A549 (cell line): ENCODE measurements at regions of chr3 and their contacts with region 1.

Region 1: GRCh38 chr3:102229062-102229655 is 205.7 kb upstream of the ZPLD1 start:
- DNase-seq: peak; percentile 19 to 75
- ATAC-seq: peak; percentile 78 to 88
- H3K4me3 ChIP-seq: no peak overlapping the region
- H3K27ac ChIP-seq: no peak overlapping the region
- H3K4me1 ChIP-seq: peaks cover 8% of the 10 kb centered on the region
- CTCF ChIP-seq: peak; percentile 92
- EP300 ChIP-seq: no peak
- POLR2A ChIP-seq: no peak
- RAD21 ChIP-seq: peak; percentile 94 to 95

Region 2: DNA sequence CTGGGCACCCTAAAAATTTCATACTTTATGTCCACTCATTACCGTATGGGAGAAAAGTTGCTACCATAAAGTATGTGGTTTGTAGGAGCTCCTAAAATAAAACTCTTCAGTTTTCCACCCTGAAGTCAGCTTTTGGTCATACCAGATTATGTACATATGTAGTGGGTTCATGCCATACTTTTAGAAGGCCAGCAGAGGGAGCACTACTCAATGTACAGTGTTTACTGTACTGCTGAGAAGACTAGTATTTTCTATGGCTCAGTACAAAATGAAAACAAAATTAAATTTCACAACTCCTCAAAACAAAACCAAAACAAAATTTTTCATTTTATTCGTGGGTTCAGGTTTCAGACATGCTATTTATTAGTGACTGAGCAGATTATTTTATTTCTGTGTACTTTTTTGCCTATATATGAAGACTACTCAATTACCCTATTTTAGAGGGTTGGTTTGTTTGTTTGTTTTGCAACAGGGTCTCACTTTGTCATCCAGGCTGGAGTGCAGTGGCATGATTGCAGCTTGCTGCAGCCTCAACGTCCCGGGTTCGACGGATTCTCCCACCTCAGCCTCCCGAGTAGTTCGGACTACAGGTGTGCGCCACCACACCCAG is 425.9 kb before region 1 on chr3:
- CTCF ChIA-PET with region 1: interaction called, 186 read pairs
- POLR2A ChIA-PET with region 1: no interaction called
- DNase-seq: peak; percentile 54 to 76
- ATAC-seq: peak; percentile 99
- H3K4me3 ChIP-seq: no peak overlapping the region
- H3K27ac ChIP-seq: no peak overlapping the region
- H3K4me1 ChIP-seq: no peaks in the 10 kb centered on the region
- CTCF ChIP-seq: peak; percentile 87
- EP300 ChIP-seq: no peak
- POLR2A ChIP-seq: no peak
- RAD21 ChIP-seq: peak; percentile 44 to 51; a peak in 4 of 5 replicates

Region 3: GRCh38 chr3:101827211-101828174 is 401.7 kb before region 1 on chr3:
- CTCF ChIA-PET with region 1: interaction called, 22 read pairs
- POLR2A ChIA-PET with region 1: interaction called, 7 read pairs
- DNase-seq: peak in 1 of 2 experiments; percentile 67
- ATAC-seq: peak; percentile 89 to 92
- H3K4me3 ChIP-seq: peak overlapping the region; percentile 61
- H3K27ac ChIP-seq: peak overlapping the region; percentile 88 to 94
- H3K4me1 ChIP-seq: peaks cover 40% of the 10 kb centered on the region
- CTCF ChIP-seq: no peak
- EP300 ChIP-seq: no peak
- POLR2A ChIP-seq: no peak
- RAD21 ChIP-seq: peak in 1 of 2 experiments; percentile 17; a peak in 2 of 5 replicates

Region 4: GRCh38 chr3:101868534-101869464 is 360.4 kb before region 1 on chr3:
- CTCF ChIA-PET with region 1: interaction called, 10 read pairs
- POLR2A ChIA-PET with region 1: interaction called, 4 read pairs
- DNase-seq: peak in 1 of 2 experiments; percentile 83
- ATAC-seq: peak; percentile 66 to 71
- H3K4me3 ChIP-seq: no peak overlapping the region
- H3K27ac ChIP-seq: peak overlapping the region; percentile 71 to 81
- H3K4me1 ChIP-seq: peaks cover 52% of the 10 kb centered on the region
- CTCF ChIP-seq: no peak
- EP300 ChIP-seq: peak; percentile 71 to 81; a peak in 3 of 5 replicates
- POLR2A ChIP-seq: no peak
- RAD21 ChIP-seq: peak in 1 of 2 experiments; percentile 48; a peak in 3 of 5 replicates

Region 5: DNA sequence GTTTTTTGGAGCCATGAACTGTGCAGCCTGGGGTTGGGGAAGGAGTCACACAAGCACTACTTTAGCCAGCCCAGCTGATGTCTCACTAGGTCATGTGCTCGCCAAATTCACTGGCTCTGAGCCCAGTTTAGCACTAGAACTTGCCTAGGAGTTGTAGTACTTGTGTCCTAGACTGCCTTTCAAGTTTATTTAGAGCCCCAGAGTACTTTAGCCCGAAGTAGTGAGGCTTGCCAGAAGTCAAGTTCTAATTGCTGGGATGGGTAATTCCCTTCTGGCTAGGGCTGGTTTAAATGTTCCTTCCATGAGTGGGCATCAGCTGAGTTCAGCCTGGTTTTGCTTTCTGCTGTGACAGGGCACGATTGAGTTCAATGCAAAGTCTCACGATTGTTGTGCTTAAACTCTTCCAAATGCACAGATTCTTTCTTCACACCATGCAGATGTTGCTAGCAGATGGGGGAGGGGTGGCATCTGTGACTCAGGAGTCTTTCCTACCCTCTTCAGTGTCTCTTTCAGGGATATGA is 22.6 kb before region 1 on chr3:
- CTCF ChIA-PET with region 1: interaction called, 10 read pairs
- POLR2A ChIA-PET with region 1: no interaction called
- DNase-seq: no peak
- ATAC-seq: no peak
- H3K4me3 ChIP-seq: no peak overlapping the region
- H3K27ac ChIP-seq: peak overlapping the region in 1 of 2 experiments; percentile 64; a peak in 3 of 6 replicates
- H3K4me1 ChIP-seq: peaks cover 8% of the 10 kb centered on the region; the same call in 2 of the 3 replicates
- CTCF ChIP-seq: no peak
- EP300 ChIP-seq: no peak
- POLR2A ChIP-seq: no peak
- RAD21 ChIP-seq: no peak